Thyroid gland (tissue), 4 donors: ENCODE measurements at regions of chr6 and their contacts with region 1.

Region 1: GRCh38 chr6:57089687-57090460 is at the start of gene ZNF451:
- DNase-seq: peak; percentile 98
- H3K4me3 ChIP-seq: peak within 1 kb of the TSS in 1 of 3 donors; percentile 41
- H3K27ac ChIP-seq: peak within 1 kb of the TSS; percentile 30 to 47 (median 42)
- H3K4me1 ChIP-seq: peaks cover 10 to 17% of the 10 kb centered on the region in 2 donors
- H3K27me3 ChIP-seq: no peaks in the 10 kb centered on the region
- CTCF ChIP-seq: peak in 1 of 6 experiments; percentile 28
- POLR2A ChIP-seq: peak; percentile 75 to 94
- total RNA-seq, gene ZNF451: 71.7 to 126 (median 85.6) TPM

Region 2: DNA sequence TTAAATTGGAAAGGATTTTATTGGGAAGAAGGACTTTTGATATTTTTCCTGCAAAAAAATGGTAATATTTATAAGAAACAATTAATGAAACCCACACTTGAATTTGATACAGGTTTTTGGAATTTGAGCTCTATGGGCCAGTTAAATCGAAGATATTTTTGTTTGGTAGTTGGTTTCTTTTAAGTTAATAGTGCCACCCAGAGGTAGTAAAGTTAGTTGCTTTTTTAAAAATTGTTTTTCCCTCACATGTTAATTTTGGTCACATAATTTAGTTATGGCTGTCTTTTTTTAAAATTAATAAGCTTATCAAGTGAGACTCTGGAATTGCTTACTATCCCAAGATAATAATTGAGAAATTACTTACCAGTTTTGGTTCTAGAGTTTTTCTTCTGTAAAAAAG is 234.7 kb after region 1 on chr6:
- intact Hi-C with region 1: loop called (anchors 10 kb)
- DNase-seq: no peak
- H3K4me3 ChIP-seq: no peak overlapping the region
- H3K27ac ChIP-seq: no peak overlapping the region
- H3K4me1 ChIP-seq: no peaks in the 10 kb centered on the region
- H3K27me3 ChIP-seq: no peaks in the 10 kb centered on the region
- CTCF ChIP-seq: peak in 4 of 6 experiments; percentile 23 to 59 (median 55)
- POLR2A ChIP-seq: no peak